Ascending aorta (tissue), 2 donors: ENCODE measurements at regions of chr7 and their contacts with region 1.

Region 1: DNA sequence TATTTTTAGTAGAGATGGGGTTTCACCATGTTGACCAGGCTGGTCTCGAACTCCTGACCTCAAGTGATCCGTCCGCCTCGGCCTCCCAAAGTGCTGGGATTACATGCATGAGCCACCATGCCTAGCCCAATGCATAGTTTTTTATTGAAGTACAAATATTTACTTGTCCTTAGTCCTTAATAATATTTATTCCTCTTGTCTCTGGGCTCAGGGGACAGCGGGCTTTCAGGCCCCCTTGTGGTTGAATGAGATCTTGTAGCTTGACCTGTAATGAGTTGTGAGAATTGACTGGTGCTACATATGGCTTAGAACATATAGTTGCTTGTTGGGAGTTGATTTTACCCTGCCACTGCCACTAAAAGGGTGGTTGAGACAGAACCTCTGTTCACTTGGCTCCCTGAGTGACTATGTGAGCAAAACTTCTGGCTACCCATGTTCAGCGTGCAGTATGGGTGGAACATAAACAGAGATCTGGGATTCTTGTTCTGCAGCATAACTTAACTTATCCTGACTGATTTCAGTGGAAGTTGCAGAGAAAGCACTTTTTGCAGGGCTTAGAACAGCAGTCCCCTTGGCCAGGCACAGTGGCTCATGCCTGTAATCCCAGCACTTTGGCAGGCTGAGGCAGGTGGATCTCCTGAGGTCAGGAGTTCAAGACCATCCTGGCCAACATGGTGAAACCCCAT is 14.9 kb downstream of the CCL26 start:
- DNase-seq: no peak
- H3K4me3 ChIP-seq: no peak overlapping the region
- H3K27ac ChIP-seq: no peak overlapping the region
- H3K4me1 ChIP-seq: peaks cover 0 to under 1% of the 10 kb centered on the region in 2 donors
- H3K27me3 ChIP-seq: no peaks in the 10 kb centered on the region
- CTCF ChIP-seq: peak in 1 of 3 experiments; percentile 28

Region 2: DNA sequence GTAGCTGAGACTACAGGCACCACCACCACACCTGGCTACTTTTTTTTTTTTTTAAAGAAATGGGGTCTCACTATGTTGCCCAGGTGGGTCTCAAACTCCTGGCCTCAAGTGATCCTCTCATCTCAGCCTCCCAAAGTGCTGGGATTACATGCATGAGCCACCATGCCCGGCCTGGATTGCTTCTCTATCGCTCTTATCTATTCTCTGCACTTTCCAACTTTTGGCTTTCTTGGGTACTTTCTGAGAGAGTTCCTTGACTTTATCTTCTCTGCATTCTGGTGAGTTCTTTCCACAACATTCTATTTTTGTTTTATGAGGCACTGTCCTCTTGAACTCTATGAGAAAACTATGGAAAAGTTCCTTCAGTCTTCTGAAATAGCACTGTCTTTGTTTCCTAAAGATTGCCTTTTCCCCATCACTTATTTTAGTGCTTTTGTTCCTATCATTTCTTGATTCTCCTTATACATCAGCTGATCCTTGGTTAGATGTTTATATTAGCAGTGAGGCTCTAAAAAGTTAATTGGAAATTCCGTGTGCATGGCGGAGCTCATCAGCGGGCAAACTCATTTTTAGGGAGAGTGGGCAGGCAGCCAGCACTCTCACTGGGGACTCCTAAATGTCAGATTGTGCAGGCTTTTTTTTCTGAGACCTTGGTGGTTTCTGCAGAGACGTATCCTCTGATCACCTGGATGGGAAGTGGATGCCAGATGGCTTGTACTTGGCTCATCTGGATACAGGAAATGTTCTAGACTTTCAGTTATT is 62.3 kb before region 1 on chr7:
- intact Hi-C with region 1: loop called (anchors 10 kb)
- DNase-seq: peak in 1 of 2 donors; percentile 8
- H3K4me3 ChIP-seq: no peak overlapping the region
- H3K27ac ChIP-seq: peak overlapping the region; percentile 14 to 50
- H3K4me1 ChIP-seq: peaks cover 0 to 3% of the 10 kb centered on the region in 2 donors
- H3K27me3 ChIP-seq: no peaks in the 10 kb centered on the region
- CTCF ChIP-seq: no peak